PC-9 (cell line): ENCODE measurements at regions of chr3 and their contacts with region 1.

Region 1: GRCh38 chr3:158644345-158644908 is at the start of gene GFM1:
- DNase-seq: peak; percentile 89 to 92
- H3K4me3 ChIP-seq: peak within 1 kb of the TSS; percentile 96
- H3K27ac ChIP-seq: peak within 1 kb of the TSS; percentile 59
- H3K4me1 ChIP-seq: peaks cover 16% of the 10 kb centered on the region
- H3K27me3 ChIP-seq: no peaks in the 10 kb centered on the region
- CTCF ChIP-seq: peak; percentile 78
- total RNA-seq, gene GFM1: 43.0 and 45.4 TPM in 2 replicates

Region 2: DNA sequence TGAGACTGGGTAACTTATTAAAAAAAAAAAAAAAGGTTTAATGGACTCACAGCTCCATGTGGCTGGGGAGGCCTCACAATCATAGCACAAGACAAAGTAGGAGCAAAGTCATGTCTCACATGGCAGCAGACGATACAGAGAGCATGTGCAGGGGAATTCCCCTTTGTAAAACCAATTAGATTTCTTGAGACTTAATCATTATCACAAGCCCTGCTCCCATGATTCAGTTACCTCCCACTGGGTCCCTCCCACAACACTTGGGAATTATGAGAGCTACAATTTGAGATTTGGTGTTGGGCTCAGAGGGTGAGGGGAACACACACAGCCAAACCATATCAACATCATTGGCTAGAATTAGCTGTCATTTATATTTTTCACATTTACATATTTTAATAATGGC is 313.6 kb before region 1 on chr3:
- CTCF ChIA-PET with region 1: no interaction called
- POLR2A ChIA-PET with region 1: no interaction called
- intact Hi-C with region 1: no loop called
- DNase-seq: no peak
- H3K4me3 ChIP-seq: no peak overlapping the region
- H3K27ac ChIP-seq: no peak overlapping the region
- H3K4me1 ChIP-seq: no peaks in the 10 kb centered on the region
- H3K27me3 ChIP-seq: no peaks in the 10 kb centered on the region
- CTCF ChIP-seq: no peak

Region 3: GRCh38 chr3:158407844-158408517 is 236.4 kb before region 1 on chr3:
- CTCF ChIA-PET with region 1: no interaction called
- POLR2A ChIA-PET with region 1: no interaction called
- intact Hi-C with region 1: no loop called
- DNase-seq: no peak
- H3K4me3 ChIP-seq: no peak overlapping the region
- H3K27ac ChIP-seq: no peak overlapping the region
- H3K4me1 ChIP-seq: no peaks in the 10 kb centered on the region
- H3K27me3 ChIP-seq: no peaks in the 10 kb centered on the region
- CTCF ChIP-seq: no peak

Region 4: DNA sequence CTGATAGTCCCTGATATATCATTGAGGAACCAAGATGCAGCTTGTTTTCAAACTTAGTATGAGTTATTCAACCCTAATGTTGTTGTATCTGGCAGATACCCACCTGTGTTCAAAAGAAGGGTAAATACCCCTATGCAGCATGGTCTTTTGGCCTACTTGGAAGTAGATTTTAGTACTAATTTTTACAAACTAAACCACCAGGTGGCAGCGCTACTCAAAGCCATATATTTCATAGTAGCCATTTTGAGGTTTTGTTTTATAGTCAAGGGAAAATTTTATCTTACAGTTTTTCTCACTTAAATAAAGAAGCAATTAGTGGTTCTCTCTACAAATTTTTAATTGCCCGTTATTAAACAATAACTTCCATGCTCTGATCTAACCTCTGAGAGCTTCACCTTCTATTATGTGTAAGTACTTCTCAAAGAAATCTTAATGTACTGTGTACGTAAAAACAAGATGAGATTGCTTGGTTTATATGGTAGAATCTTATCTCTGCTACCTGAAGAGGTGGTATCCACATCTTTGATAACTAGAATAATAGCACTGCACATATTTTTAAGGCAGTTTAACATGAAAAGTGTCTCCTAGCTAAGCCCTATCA is 104.9 kb before region 1 on chr3:
- CTCF ChIA-PET with region 1: no interaction called
- POLR2A ChIA-PET with region 1: no interaction called
- intact Hi-C with region 1: loop called (anchors 5 kb)
- DNase-seq: peak in 1 of 2 experiments; percentile 12
- H3K4me3 ChIP-seq: no peak overlapping the region
- H3K27ac ChIP-seq: no peak overlapping the region
- H3K4me1 ChIP-seq: no peaks in the 10 kb centered on the region
- H3K27me3 ChIP-seq: no peaks in the 10 kb centered on the region
- CTCF ChIP-seq: peak; percentile 78

Region 5: GRCh38 chr3:158570999-158571974 is 73.1 kb before region 1 on chr3 and contains the start of gene MLF1:
- CTCF ChIA-PET with region 1: interaction called, 3 read pairs
- POLR2A ChIA-PET with region 1: interaction called, 5 read pairs
- intact Hi-C with region 1: loop called (anchors 5 kb)
- DNase-seq: peak; percentile 90 to 98
- H3K4me3 ChIP-seq: peak within 1 kb of the TSS; percentile 94
- H3K27ac ChIP-seq: peak within 1 kb of the TSS; percentile 52
- H3K4me1 ChIP-seq: peaks cover 5% of the 10 kb centered on the region; the same call in 1 of the 2 replicates
- H3K27me3 ChIP-seq: no peaks in the 10 kb centered on the region
- CTCF ChIP-seq: no peak
- total RNA-seq, gene MLF1: 52.3 and 55.5 TPM in 2 replicates

Region 6: GRCh38 chr3:158659454-158660237 is 15.2 kb after region 1 on chr3:
- CTCF ChIA-PET with region 1: interaction called, 16 read pairs
- POLR2A ChIA-PET with region 1: interaction called, 6 read pairs
- intact Hi-C with region 1: no loop called
- DNase-seq: peak; percentile 39 to 57
- H3K4me3 ChIP-seq: no peak overlapping the region
- H3K27ac ChIP-seq: peak overlapping the region; percentile 11; the same call in 1 of the 2 replicates
- H3K4me1 ChIP-seq: no peaks in the 10 kb centered on the region
- H3K27me3 ChIP-seq: no peaks in the 10 kb centered on the region
- CTCF ChIP-seq: peak; percentile 85

Region 7: GRCh38 chr3:158718490-158719170 is 74.2 kb after region 1 on chr3:
- CTCF ChIA-PET with region 1: no interaction called
- POLR2A ChIA-PET with region 1: interaction called, 19 read pairs
- intact Hi-C with region 1: no loop called
- DNase-seq: peak; percentile 87 to 99
- H3K4me3 ChIP-seq: no peak overlapping the region; the same call in 1 of the 2 replicates
- H3K27ac ChIP-seq: peak overlapping the region; percentile 72
- H3K4me1 ChIP-seq: peaks cover 75% of the 10 kb centered on the region
- H3K27me3 ChIP-seq: no peaks in the 10 kb centered on the region
- CTCF ChIP-seq: no peak